ENCODE measurements at regions of chrX and their contacts with region 1.

Region 1: DNA sequence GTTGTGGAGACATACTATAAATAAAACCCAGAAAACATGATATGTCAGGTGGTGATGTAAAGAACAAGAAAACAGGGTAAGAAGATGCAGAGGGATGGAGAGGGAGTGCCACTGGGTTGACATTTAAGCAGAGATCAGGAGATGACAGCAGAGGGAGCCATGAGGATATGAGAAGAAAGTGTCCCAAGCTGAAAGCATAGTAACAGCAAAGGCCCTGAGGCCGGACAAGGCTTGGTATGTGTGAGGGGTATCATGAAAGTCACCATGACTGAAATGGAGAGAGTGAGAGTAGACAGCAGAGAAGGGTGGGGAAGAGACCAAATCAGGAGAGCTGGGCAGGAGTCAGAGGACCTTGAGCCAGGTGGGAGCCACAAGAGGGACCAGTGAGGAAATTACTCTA is 3.4 kb downstream of the GPKOW start:
- DNase-seq: peak; percentile 54
- H3K4me3 Mint-ChIP-seq: no peak overlapping the region
- H3K27ac Mint-ChIP-seq: peak overlapping the region; percentile 42
- H3K4me1 Mint-ChIP-seq: peaks cover 28% of the 10 kb centered on the region
- H3K27me3 Mint-ChIP-seq: no peaks in the 10 kb centered on the region

Region 2: GRCh38 chrX:49155900-49156837 is 36.1 kb after region 1 on chrX:
- intact Hi-C with region 1: loop called (anchors 1 kb)
- DNase-seq: peak; percentile 96
- H3K4me3 Mint-ChIP-seq: peak overlapping the region; percentile 94
- H3K27ac Mint-ChIP-seq: peak overlapping the region; percentile 98
- H3K4me1 Mint-ChIP-seq: peaks cover 15% of the 10 kb centered on the region
- H3K27me3 Mint-ChIP-seq: peaks cover 2% of the 10 kb centered on the region

Region 3: GRCh38 chrX:49269010-49269767 is 149.1 kb after region 1 on chrX:
- intact Hi-C with region 1: no loop called
- DNase-seq: peak; percentile 97
- H3K4me3 Mint-ChIP-seq: peak overlapping the region; percentile 99
- H3K27ac Mint-ChIP-seq: peak overlapping the region; percentile 100
- H3K4me1 Mint-ChIP-seq: peaks cover 46% of the 10 kb centered on the region
- H3K27me3 Mint-ChIP-seq: no peaks in the 10 kb centered on the region